RWPE1 (cell line): ENCODE measurements at regions of chr7 and their contacts with region 1.

Region 1: DNA sequence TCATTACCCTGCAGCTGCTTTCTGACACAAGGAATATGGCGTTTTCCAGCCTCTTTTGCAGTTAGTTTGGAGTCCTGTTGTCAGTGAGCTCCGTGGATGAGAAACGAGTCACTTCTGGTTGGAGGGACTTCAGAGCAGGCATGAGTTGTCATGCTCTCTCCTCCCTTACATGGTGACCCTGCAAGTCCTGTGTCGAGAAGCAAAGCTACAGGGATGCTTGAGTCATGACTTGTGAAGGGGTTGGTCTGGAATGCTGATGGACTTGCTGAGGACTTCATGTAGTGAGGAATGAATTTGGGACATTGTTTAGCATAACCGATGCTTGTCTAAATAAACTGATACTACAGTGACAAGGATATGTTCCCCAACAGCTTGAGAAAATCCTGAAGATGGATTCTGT is 108.8 kb downstream of the ADCYAP1R1 start:
- DNase-seq: no peak
- H3K27ac ChIP-seq: no peak overlapping the region
- CTCF ChIP-seq: no peak

Region 2: GRCh38 chr7:31059551-31059950 is 101.4 kb before region 1 on chr7:
- CTCF ChIA-PET with region 1: no interaction called
- POLR2A ChIA-PET with region 1: no interaction called
- DNase-seq: no peak
- H3K27ac ChIP-seq: no peak overlapping the region
- CTCF ChIP-seq: no peak

Region 3: GRCh38 chr7:31192986-31193385 is 32.0 kb after region 1 on chr7:
- CTCF ChIA-PET with region 1: interaction called, 3 read pairs
- POLR2A ChIA-PET with region 1: interaction called, 14 read pairs
- DNase-seq: peak; percentile 66
- H3K27ac ChIP-seq: no peak overlapping the region
- CTCF ChIP-seq: peak; percentile 87